ENCODE measurements at regions of chr4 and their contacts with region 1.

Region 1: DNA sequence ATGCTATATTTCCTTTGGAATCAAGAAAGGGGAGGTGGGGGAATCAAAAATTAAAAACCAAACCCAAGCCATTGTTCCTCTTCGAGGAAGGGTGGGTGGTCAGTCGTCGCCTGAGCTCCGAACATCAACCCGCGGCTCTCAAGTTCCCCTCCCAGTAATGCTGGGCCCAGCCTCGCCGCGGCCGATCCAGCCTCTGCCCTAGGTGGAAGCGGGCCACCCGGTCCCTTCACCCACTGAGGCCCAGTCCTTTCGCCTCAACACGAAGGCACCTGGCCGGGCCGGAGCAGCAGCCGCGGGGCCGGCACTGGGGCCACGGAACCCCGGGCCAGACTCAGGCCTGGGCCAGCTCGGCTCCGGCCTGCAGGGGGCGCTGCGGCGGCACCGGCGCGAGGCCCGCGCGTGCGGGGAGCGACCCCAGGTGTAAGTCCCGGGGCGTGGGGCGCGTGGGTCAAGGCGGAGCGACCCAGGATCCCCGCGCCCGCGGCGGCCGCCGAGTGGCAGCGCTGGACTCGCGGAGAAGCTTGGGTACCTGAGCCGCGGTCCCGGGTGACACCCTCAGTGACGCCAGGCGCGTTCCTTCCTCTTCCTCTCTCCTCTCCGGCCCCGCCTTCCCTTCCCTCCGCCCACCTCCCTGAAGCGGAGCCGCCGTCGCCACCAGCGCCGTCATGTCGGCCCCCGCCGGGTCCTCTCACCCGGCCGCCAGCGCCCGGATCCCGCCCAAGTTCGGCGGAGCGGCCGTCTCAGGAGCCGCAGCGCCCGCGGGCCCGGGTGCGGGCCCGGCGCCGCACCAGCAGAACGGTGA is at the start of gene SEC24B:
- DNase-seq: peak; percentile 94
- ATAC-seq: peak; percentile 82
- H3K4me3 Mint-ChIP-seq: peak within 1 kb of the TSS; percentile 83
- H3K27ac Mint-ChIP-seq: peak within 1 kb of the TSS; percentile 93
- H3K4me1 Mint-ChIP-seq: peaks cover 61% of the 10 kb centered on the region
- H3K27me3 Mint-ChIP-seq: no peaks in the 10 kb centered on the region
- total RNA-seq, gene SEC24B: 24.6 to 35.9 TPM

Region 2: DNA sequence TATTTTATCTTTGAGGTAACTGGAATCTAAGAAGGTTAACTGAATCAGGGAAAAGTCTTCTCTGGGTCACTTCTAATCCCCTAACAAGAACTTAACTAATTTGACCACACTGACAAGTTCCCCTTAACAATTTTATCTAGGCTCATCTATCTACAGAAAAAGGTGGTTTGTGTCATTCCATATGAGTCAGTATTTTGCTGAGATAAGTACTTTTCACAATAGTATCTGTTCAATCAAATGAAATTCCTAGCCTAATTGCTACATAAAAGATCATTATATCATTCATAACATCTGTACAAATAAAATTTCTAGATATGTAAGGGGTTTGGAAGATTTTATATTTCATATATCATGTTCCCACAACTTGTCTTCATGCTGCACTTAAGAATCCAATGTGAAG is 176.6 kb before region 1 on chr4:
- CTCF ChIA-PET with region 1: no interaction called
- POLR2A ChIA-PET with region 1: no interaction called
- intact Hi-C with region 1: no loop called
- DNase-seq: no peak
- ATAC-seq: no peak
- H3K4me3 Mint-ChIP-seq: no peak overlapping the region
- H3K27ac Mint-ChIP-seq: no peak overlapping the region
- H3K4me1 Mint-ChIP-seq: no peaks in the 10 kb centered on the region
- H3K27me3 Mint-ChIP-seq: peaks cover 1% of the 10 kb centered on the region

Region 3: GRCh38 chr4:109302361-109303139 is 130.9 kb before region 1 on chr4 and contains the start of gene COL25A1:
- CTCF ChIA-PET with region 1: no interaction called
- POLR2A ChIA-PET with region 1: no interaction called
- intact Hi-C with region 1: no loop called
- DNase-seq: peak; percentile 52
- ATAC-seq: peak; percentile 63
- H3K4me3 Mint-ChIP-seq: peak within 1 kb of the TSS; percentile 63
- H3K27ac Mint-ChIP-seq: peak within 1 kb of the TSS; percentile 12
- H3K4me1 Mint-ChIP-seq: peaks cover 13% of the 10 kb centered on the region
- H3K27me3 Mint-ChIP-seq: peaks cover 54% of the 10 kb centered on the region
- total RNA-seq, gene COL25A1: not detected

Region 4: GRCh38 chr4:109559983-109560686 is 126.7 kb after region 1 on chr4 and contains the start of gene MCUB:
- CTCF ChIA-PET with region 1: interaction called, 5 read pairs
- POLR2A ChIA-PET with region 1: interaction called, 3 read pairs
- intact Hi-C with region 1: loop called (anchors 1 kb)
- DNase-seq: peak; percentile 96
- ATAC-seq: peak; percentile 89
- H3K4me3 Mint-ChIP-seq: peak within 1 kb of the TSS; percentile 86
- H3K27ac Mint-ChIP-seq: peak within 1 kb of the TSS; percentile 97
- H3K4me1 Mint-ChIP-seq: peaks cover 49% of the 10 kb centered on the region
- H3K27me3 Mint-ChIP-seq: no peaks in the 10 kb centered on the region
- total RNA-seq, gene MCUB: 58.2 to 80.1 TPM

Region 5: GRCh38 chr4:109658871-109659410 is 225.5 kb after region 1 on chr4:
- CTCF ChIA-PET with region 1: interaction called, 4 read pairs
- POLR2A ChIA-PET with region 1: no interaction called
- intact Hi-C with region 1: loop called in 1 of 2 experiments (anchors 2 kb)
- DNase-seq: peak; percentile 29
- ATAC-seq: no peak
- H3K4me3 Mint-ChIP-seq: no peak overlapping the region
- H3K27ac Mint-ChIP-seq: peak overlapping the region; percentile 37
- H3K4me1 Mint-ChIP-seq: peaks cover 36% of the 10 kb centered on the region
- H3K27me3 Mint-ChIP-seq: no peaks in the 10 kb centered on the region

Region 6: GRCh38 chr4:109729718-109730618 is 296.6 kb after region 1 on chr4 and contains the start of gene PLA2G12A:
- CTCF ChIA-PET with region 1: interaction called, 8 read pairs
- POLR2A ChIA-PET with region 1: interaction called, 4 read pairs
- intact Hi-C with region 1: loop called (anchors 1 kb)
- DNase-seq: peak; percentile 85
- ATAC-seq: peak; percentile 87
- H3K4me3 Mint-ChIP-seq: peak within 1 kb of the TSS; percentile 84
- H3K27ac Mint-ChIP-seq: peak within 1 kb of the TSS; percentile 71
- H3K4me1 Mint-ChIP-seq: peaks cover 14% of the 10 kb centered on the region
- H3K27me3 Mint-ChIP-seq: no peaks in the 10 kb centered on the region
- total RNA-seq, gene PLA2G12A: 17.9 to 31.1 TPM

Measured in activated CD4-positive, alpha-beta T cell treated with anti-CD3 and anti-CD28 coated beads for 36 hours (primary cell).